ENCODE measurements at regions of chr1 and their contacts with region 1.

Region 1: DNA sequence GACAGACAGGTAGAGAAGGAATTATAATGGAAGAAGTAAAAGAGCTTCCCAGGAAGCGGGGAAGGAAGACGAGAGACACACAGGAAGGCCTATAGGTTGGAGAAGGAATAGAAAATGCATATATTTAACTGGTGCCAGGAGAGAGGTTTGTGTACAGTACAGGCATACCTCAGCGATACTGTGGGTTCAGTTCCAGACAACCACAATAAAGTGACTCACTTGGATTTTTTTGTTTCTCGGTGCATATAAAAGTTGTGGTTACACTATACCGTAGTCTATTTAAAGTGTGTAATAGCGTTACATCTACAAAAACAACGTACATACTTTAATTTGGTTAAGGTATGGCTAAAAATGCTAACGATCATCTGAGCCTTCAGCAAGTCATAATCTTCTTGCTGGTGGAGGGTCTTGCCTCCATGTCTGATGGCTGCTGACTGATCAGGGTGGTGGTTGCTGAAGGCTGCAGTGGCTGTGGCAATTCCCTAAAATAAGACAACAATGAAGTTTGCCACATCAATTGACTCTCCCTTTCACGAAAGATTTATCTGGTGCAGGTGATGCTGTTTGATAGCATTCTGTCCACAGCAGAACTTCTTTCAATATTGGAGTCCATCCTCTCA is 16.0 kb downstream of the YARS1 start:
- DNase-seq: no peak
- ATAC-seq: no peak; the same call in 2 of the 3 replicates
- H3K4me3 ChIP-seq: no peak overlapping the region
- H3K27ac ChIP-seq: no peak overlapping the region
- H3K4me1 ChIP-seq: peaks cover 0 to 4% of the 10 kb centered on the region in 2 experiments; a peak in 1 of 5 replicates
- H3K27me3 ChIP-seq: no peaks in the 10 kb centered on the region
- CTCF ChIP-seq: no peak
- EP300 ChIP-seq: no peak
- POLR2A ChIP-seq: no peak
- RAD21 ChIP-seq: no peak

Region 2: DNA sequence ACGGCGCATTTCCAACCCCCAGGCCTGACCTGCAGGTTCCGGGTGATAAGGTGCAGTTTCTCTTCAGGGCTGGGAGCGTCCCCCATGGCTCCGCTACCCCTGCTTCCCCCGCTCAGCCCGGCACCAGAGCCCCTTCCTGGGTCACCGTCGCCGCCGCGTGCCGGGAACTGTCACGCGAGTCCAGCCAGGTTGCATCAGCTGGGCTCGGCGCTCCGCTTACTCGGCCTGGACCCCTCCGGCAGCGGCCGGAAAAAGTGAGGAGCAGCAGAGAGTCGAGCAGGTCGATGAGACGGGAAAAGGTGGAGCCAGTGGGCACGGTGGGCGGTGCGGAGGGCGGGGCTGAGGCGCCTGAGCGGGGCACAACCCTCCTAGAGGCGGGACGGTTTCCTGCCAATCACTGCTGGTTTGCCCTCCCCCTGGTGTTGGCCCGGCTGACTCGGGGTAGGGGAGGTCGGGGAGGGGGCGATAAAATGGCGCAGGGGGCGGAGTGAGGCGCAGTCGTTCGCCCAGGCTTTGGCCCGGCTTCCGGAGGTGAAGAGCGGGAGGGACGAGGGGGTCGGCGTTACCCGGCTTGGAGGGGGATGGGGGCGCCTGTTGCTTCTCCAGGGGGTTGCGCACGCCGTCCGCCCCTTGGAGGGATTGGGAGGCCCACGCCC is 16.1 kb after region 1 on chr1 and contains the starts of genes S100PBP and YARS1:
- CTCF ChIA-PET with region 1: no interaction called
- POLR2A ChIA-PET with region 1: interaction called, 10 read pairs
- in situ Hi-C with region 1: no loop called
- intact Hi-C with region 1: no loop called
- DNase-seq: peak; percentile 97 to 100 (median 98)
- ATAC-seq: peak; percentile 89
- H3K4me3 ChIP-seq: peak within 1 kb of the TSS; percentile 74
- H3K27ac ChIP-seq: peak within 1 kb of the TSS; percentile 98
- H3K4me1 ChIP-seq: peaks cover 36 to 39% of the 10 kb centered on the region in 2 experiments
- H3K27me3 ChIP-seq: no peaks in the 10 kb centered on the region
- CTCF ChIP-seq: 0 out of 6 replicates have a peak, but pooled peaks of 1 of the 3 experiments have one; percentile 8
- EP300 ChIP-seq: peak; percentile 94
- POLR2A ChIP-seq: peak; percentile 92
- RAD21 ChIP-seq: peak; percentile 31 to 44; a peak in 3 of 4 replicates
- polyA plus RNA-seq, gene S100PBP: 22.9 to 31.8 TPM
- polyA plus RNA-seq, gene YARS1: 66.2 to 92.8 TPM

Region 3: GRCh38 chr1:32830092-32830852 is 29.1 kb after region 1 on chr1:
- CTCF ChIA-PET with region 1: no interaction called
- POLR2A ChIA-PET with region 1: no interaction called
- in situ Hi-C with region 1: no loop called
- intact Hi-C with region 1: no loop called
- DNase-seq: no peak
- ATAC-seq: no peak
- H3K4me3 ChIP-seq: no peak overlapping the region
- H3K27ac ChIP-seq: no peak overlapping the region
- H3K4me1 ChIP-seq: no peaks in the 10 kb centered on the region
- H3K27me3 ChIP-seq: no peaks in the 10 kb centered on the region
- CTCF ChIP-seq: no peak
- EP300 ChIP-seq: no peak
- POLR2A ChIP-seq: no peak
- RAD21 ChIP-seq: no peak